Right cardiac atrium (tissue), 5 donors: ENCODE measurements at regions of chr5 and their contacts with region 1.

Region 1: DNA sequence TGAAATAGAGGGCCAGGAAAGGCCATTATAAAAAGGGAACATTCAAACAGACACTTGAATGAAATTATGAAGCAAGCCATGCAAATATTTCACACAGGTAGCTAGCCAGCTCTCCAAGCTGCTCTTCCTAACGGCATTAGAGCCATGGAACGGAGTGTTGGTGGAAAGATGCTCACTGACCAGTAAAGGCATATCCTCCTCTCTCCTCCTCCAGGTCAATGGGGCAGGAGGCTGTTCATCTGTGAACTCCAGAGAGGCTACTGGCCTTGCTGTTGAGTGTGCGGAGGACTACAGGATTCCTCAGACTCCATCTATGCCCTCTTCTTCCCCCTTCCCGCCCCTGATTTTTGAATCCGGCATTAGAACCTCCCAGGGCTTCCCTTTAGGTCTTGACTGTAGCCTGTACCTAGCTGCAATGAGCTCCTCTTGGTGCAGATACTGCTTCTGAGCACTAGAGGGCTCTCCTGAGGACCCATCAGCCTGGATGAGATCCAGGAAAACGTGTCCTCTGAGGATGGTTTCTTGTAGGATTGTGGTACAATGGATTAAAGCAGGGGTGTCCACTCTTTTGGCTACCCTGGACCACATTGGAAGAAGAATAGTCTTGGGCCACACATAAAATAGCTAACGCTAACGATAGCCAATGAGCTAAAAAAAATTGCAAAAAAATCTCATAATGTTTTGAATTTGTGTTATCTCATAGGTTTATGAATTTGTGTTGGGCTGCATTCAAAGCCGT is 162.2 kb downstream of the SREK1 start:
- DNase-seq: peak in 1 of 3 donors; percentile 21
- ATAC-seq: peak; percentile 75 to 84
- H3K4me3 ChIP-seq: no peak overlapping the region
- H3K27ac ChIP-seq: no peak overlapping the region
- H3K4me1 ChIP-seq: no peaks in the 10 kb centered on the region
- H3K27me3 ChIP-seq: no peaks in the 10 kb centered on the region

Region 2: DNA sequence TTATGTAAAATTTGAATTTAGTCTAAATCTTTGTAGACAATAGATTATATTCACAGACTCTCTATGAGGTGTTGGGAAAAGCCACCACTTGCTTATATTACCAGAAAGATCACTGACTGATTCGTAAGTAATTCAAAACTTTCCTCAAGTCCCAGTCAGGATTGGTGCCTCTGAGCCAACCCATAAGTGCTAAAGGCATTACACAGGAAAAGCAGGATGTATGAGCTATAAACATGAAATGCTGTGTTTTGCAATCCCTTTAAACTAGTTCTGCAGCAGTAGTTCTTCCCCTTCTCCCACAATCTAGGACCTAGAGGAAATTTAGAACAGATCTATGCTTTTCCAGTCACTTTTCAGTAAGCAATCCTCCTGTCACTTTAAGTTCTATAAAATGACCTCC is 633.5 kb before region 1 on chr5:
- intact Hi-C with region 1: no loop called
- DNase-seq: no peak
- ATAC-seq: no peak
- H3K4me3 ChIP-seq: no peak overlapping the region
- H3K27ac ChIP-seq: no peak overlapping the region
- H3K4me1 ChIP-seq: no peaks in the 10 kb centered on the region
- H3K27me3 ChIP-seq: no peaks in the 10 kb centered on the region

Region 3: DNA sequence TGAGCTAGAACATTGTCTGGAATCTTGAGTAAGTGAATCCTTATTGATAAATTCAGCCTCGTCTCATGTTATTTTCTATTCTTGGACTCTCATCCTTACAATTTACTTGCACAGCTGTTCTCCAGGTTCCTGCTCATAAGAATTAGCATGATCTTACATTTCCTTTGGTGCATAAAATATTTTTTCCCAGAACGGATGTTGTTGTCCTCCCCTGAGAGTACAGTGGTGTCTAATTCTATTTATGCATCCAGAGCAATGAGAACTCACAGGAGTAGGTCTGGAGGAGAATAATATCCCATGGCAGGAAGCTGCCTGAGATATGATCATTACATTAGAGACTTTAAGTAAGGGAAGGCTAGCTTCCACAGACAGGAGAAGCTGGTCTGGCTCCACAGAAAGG is 111.5 kb after region 1 on chr5:
- intact Hi-C with region 1: no loop called
- DNase-seq: no peak
- ATAC-seq: no peak
- H3K4me3 ChIP-seq: no peak overlapping the region
- H3K27ac ChIP-seq: no peak overlapping the region
- H3K4me1 ChIP-seq: peaks cover 10% of the 10 kb centered on the region
- H3K27me3 ChIP-seq: no peaks in the 10 kb centered on the region

Region 4: GRCh38 chr5:66436721-66437120 is 130.4 kb after region 1 on chr5:
- intact Hi-C with region 1: loop called in 1 of 4 experiments (anchors 10 kb)
- DNase-seq: peak in 2 of 3 donors; percentile 50 to 58
- ATAC-seq: peak; percentile 13 to 15
- H3K4me3 ChIP-seq: peak overlapping the region; percentile 74
- H3K27ac ChIP-seq: peak overlapping the region; percentile 15
- H3K4me1 ChIP-seq: peaks cover 3% of the 10 kb centered on the region
- H3K27me3 ChIP-seq: no peaks in the 10 kb centered on the region

Region 5: GRCh38 chr5:66498791-66499207 is 192.5 kb after region 1 on chr5:
- intact Hi-C with region 1: loop called in 2 of 4 experiments (anchors 5 to 10 kb)
- DNase-seq: peak; percentile 20 to 56 (median 47)
- ATAC-seq: peak; percentile 83 to 93
- H3K4me3 ChIP-seq: no peak overlapping the region
- H3K27ac ChIP-seq: peak overlapping the region; percentile 13
- H3K4me1 ChIP-seq: no peaks in the 10 kb centered on the region
- H3K27me3 ChIP-seq: no peaks in the 10 kb centered on the region

Region 6: GRCh38 chr5:66742083-66742895 is 436.0 kb after region 1 on chr5:
- intact Hi-C with region 1: loop called in 1 of 4 experiments (anchors 5 kb)
- DNase-seq: peak; percentile 44 to 81 (median 75)
- ATAC-seq: peak; percentile 40 to 54
- H3K4me3 ChIP-seq: no peak overlapping the region
- H3K27ac ChIP-seq: peak overlapping the region; percentile 22
- H3K4me1 ChIP-seq: peaks cover 10% of the 10 kb centered on the region
- H3K27me3 ChIP-seq: no peaks in the 10 kb centered on the region

Region 7: DNA sequence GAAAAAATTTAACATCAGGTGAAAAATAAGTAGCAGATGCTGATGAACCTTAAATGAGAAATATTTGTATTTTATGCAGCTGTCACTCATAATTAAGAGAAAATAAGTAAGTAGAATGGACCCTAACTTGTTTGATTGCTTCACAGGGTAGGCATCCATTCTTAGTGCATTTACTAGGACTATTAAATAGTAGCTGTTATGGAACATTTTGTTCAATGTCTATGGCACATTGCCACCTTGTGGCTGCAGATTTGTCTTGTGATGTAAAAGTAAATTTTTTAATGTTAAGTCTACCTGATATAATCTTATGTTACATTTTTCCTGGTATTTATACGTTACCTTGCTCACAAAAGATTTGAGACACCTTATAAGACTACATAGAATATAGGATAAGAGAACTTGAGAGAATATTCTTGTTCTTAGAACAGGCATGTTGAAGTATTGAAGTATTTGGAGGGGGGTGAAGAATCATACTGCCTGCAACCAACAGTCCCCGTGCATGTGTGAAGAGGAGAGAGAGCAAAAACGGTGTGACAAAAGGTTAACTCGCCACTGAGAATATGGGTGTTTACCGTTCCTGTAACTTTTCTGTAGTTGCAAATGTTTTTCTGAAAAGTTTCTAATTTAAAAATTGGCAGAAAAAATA is 451.0 kb after region 1 on chr5:
- intact Hi-C with region 1: loop called (anchors 5 to 10 kb)
- DNase-seq: peak in 2 of 3 donors; percentile 29 to 76
- ATAC-seq: peak; percentile 61 to 74
- H3K4me3 ChIP-seq: no peak overlapping the region
- H3K27ac ChIP-seq: no peak overlapping the region
- H3K4me1 ChIP-seq: no peaks in the 10 kb centered on the region
- H3K27me3 ChIP-seq: no peaks in the 10 kb centered on the region

Region 8: DNA sequence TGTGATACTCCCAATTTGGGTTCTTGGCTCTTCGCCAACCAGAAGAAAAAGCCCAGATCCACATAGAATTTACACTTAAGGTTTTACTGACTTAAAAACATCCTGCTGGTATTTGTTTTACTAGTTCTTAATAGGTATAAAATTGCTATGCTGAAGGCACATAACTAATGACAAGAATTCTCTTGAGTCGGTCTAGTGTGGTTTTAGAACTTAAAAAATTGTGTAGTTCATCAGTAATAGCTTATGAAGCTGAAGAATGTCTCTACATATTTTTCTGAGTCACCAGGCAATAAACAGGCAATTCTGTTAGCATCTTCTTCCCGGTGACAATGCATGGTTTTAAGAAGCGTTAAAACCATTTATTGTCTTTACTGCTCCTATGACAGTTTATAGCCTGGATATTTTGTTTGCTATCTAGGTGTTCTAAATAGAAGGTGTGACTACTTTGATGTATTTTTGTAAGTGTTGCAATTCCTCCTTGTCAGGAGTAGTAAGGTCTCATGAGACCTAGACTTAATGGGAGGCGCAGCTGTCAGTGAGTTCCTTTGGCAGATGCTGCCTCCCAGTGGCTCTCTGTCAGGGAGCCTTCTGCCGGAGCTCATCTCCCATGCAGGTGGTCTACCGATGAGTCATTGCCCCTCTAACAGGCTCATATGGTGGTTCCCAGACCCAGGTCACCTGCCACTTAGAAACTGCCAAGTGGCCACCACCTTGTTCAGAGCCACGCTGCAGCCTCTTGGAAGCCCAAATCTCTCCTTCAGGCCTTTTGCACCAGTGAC is 463.8 kb after region 1 on chr5:
- intact Hi-C with region 1: loop called in 1 of 4 experiments (anchors 10 kb)
- DNase-seq: peak in 1 of 3 donors; percentile 55
- ATAC-seq: peak; percentile 57 to 71
- H3K4me3 ChIP-seq: no peak overlapping the region
- H3K27ac ChIP-seq: no peak overlapping the region
- H3K4me1 ChIP-seq: no peaks in the 10 kb centered on the region
- H3K27me3 ChIP-seq: no peaks in the 10 kb centered on the region